Activated CD4-positive, alpha-beta T cell treated with anti-CD3 and anti-CD28 coated beads, Interleukin-2, amount 10 ng/mL, durations not matched to agents 24 days and 14 days (primary cell): ENCODE measurements at regions of chr10 and their contacts with region 1.

Region 1: GRCh38 chr10:95832216-95833041 is 75.3 kb upstream of the CC2D2B start:
- DNase-seq: peak; percentile 91
- H3K4me3 Mint-ChIP-seq: peak overlapping the region; percentile 73
- H3K27ac Mint-ChIP-seq: peak overlapping the region; percentile 98
- H3K4me1 Mint-ChIP-seq: peaks cover 56% of the 10 kb centered on the region
- H3K27me3 Mint-ChIP-seq: no peaks in the 10 kb centered on the region

Region 2: GRCh38 chr10:95792874-95793285 is 39.5 kb before region 1 on chr10:
- intact Hi-C with region 1: loop called (anchors 1 kb)
- DNase-seq: no peak
- H3K4me3 Mint-ChIP-seq: no peak overlapping the region
- H3K27ac Mint-ChIP-seq: peak overlapping the region; percentile 54
- H3K4me1 Mint-ChIP-seq: peaks cover 53% of the 10 kb centered on the region
- H3K27me3 Mint-ChIP-seq: no peaks in the 10 kb centered on the region

Region 3: DNA sequence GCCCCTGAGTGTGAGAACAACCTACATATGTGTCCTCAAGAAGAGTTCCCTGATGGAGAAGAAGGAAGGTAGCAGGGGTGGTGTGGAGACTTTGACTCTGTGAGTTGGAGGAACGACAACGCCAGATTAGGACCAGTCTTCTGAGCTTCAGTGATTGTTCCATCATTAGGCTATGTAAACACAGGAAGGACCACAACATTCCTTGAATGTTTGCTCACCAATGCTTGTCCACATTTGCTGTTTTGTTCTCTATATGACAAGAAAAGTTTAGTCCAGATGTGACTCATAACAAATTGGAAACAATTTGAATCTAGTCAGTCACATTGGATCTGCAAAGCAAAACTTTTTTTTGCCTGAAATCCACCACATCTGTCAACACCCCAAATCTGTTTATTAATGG is 13.8 kb before region 1 on chr10:
- intact Hi-C with region 1: loop called (anchors 1 kb)
- DNase-seq: no peak
- H3K4me3 Mint-ChIP-seq: no peak overlapping the region
- H3K27ac Mint-ChIP-seq: peak overlapping the region; percentile 72
- H3K4me1 Mint-ChIP-seq: peaks cover 37% of the 10 kb centered on the region
- H3K27me3 Mint-ChIP-seq: no peaks in the 10 kb centered on the region